PC-3 (cell line): ENCODE measurements at regions of chr12 and their contacts with region 1.

Region 1: DNA sequence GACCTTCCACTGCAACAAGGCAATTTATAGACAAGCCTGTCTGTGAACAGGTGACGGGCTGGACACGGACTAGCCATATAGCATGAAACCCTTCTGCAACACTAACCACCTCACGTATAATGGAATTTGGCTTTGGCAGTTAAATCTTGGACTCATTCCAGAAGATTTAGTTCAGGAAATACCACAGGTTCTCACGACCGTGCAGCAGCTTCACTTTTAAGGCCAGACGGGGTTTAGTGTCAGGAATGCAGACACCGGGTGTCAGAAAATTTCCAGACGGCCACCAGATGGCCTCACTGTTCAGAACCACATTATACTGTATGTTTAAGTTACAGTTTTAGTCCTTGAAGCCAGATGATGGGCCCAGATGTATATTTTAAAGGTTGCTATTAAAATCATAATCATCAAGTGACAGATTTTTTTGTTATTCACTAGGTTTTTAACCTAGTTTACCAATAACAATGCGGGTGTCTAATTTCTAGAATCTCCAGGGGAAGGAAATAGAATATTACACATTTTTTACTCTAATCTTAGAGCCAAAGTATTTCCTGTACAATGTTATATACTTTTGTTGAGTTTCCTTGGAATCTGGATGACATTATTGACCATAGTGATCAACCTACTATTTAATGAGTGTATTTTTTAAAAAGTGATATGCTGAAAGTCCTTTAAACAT is 90.5 kb upstream of the TMPO start:
- DNase-seq: peak; percentile 89
- ATAC-seq: peak; percentile 97
- H3K4me3 ChIP-seq: 0 out of 2 replicates have a peak overlapping the region, but pooled peaks have one; percentile 20
- H3K27ac ChIP-seq: no peak overlapping the region
- H3K4me1 ChIP-seq: peaks cover 5% of the 10 kb centered on the region
- H3K27me3 ChIP-seq: no peaks in the 10 kb centered on the region
- CTCF ChIP-seq: peak; percentile 88

Region 2: DNA sequence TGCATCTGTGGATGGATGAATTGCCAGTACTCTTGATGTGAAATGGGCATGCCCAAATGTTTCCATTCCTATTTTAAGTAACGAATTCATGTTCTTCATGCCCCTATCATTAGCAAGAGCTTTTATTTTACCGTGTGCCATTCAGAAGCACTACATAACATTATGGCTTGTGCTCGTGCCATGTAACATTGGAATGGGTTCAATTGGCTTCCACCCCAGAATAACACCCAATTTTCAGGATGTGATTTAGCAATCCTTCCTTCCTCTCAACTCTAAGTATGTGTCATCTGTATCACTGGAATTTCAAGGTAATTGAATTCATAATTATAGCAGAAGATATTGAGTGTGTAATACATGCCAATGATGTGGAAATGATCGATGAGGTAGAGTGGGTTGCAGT is 55.3 kb before region 1 on chr12:
- CTCF ChIA-PET with region 1: no interaction called
- POLR2A ChIA-PET with region 1: no interaction called
- intact Hi-C with region 1: no loop called
- DNase-seq: no peak
- ATAC-seq: no peak
- H3K4me3 ChIP-seq: no peak overlapping the region
- H3K27ac ChIP-seq: no peak overlapping the region
- H3K4me1 ChIP-seq: no peaks in the 10 kb centered on the region
- H3K27me3 ChIP-seq: peaks cover 66% of the 10 kb centered on the region
- CTCF ChIP-seq: no peak

Region 3: GRCh38 chr12:98490501-98491453 is 65.9 kb after region 1 on chr12:
- CTCF ChIA-PET with region 1: no interaction called
- POLR2A ChIA-PET with region 1: no interaction called
- intact Hi-C with region 1: loop called (anchors 2 kb)
- DNase-seq: peak; percentile 90
- ATAC-seq: peak; percentile 90
- H3K4me3 ChIP-seq: peak overlapping the region; percentile 50
- H3K27ac ChIP-seq: peak overlapping the region; percentile 33
- H3K4me1 ChIP-seq: peaks cover 16% of the 10 kb centered on the region
- H3K27me3 ChIP-seq: no peaks in the 10 kb centered on the region
- CTCF ChIP-seq: peak; percentile 87

Region 4: GRCh38 chr12:98516184-98516873 is 91.5 kb after region 1 on chr12:
- CTCF ChIA-PET with region 1: interaction called, 10 read pairs
- POLR2A ChIA-PET with region 1: no interaction called
- intact Hi-C with region 1: loop called (anchors 1 kb)
- DNase-seq: peak; percentile 89
- ATAC-seq: peak; percentile 45
- H3K4me3 ChIP-seq: peak overlapping the region; percentile 98
- H3K27ac ChIP-seq: peak overlapping the region; percentile 89
- H3K4me1 ChIP-seq: peaks cover 31% of the 10 kb centered on the region
- H3K27me3 ChIP-seq: no peaks in the 10 kb centered on the region
- CTCF ChIP-seq: peak; percentile 83

Region 5: GRCh38 chr12:98532681-98533304 is 107.9 kb after region 1 on chr12:
- CTCF ChIA-PET with region 1: no interaction called
- POLR2A ChIA-PET with region 1: no interaction called
- intact Hi-C with region 1: loop called (anchors 2 kb)
- DNase-seq: peak; percentile 89
- ATAC-seq: peak; percentile 81
- H3K4me3 ChIP-seq: no peak overlapping the region
- H3K27ac ChIP-seq: no peak overlapping the region
- H3K4me1 ChIP-seq: no peaks in the 10 kb centered on the region
- H3K27me3 ChIP-seq: no peaks in the 10 kb centered on the region
- CTCF ChIP-seq: peak; percentile 84

Region 6: DNA sequence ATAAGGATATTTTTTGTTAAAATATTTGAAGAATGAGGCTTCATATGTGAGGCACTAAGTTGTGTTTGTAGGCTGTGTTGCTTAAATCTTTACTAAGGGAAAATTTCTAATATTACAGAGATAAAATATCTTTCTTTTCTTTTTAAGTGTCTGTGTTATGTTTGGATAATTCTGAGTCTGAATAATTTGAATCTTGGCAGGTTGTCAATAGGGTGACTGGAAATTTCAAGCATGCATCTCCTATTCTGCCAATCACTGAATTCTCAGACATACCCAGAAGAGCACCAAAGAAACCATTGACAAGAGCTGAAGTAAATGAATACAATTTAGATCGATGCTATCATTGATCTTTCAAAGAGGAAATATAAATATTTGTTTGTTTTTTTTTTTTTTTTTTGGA is 119.9 kb after region 1 on chr12:
- CTCF ChIA-PET with region 1: no interaction called
- POLR2A ChIA-PET with region 1: no interaction called
- intact Hi-C with region 1: no loop called
- DNase-seq: no peak
- ATAC-seq: no peak
- H3K4me3 ChIP-seq: no peak overlapping the region
- H3K27ac ChIP-seq: no peak overlapping the region
- H3K4me1 ChIP-seq: no peaks in the 10 kb centered on the region
- H3K27me3 ChIP-seq: no peaks in the 10 kb centered on the region
- CTCF ChIP-seq: no peak

Region 7: GRCh38 chr12:98635657-98636323 is 210.9 kb after region 1 on chr12:
- CTCF ChIA-PET with region 1: no interaction called
- POLR2A ChIA-PET with region 1: no interaction called
- intact Hi-C with region 1: no loop called
- DNase-seq: peak; percentile 90
- ATAC-seq: peak; percentile 99
- H3K4me3 ChIP-seq: no peak overlapping the region; the same call in 1 of the 2 replicates
- H3K27ac ChIP-seq: no peak overlapping the region
- H3K4me1 ChIP-seq: peaks cover 21% of the 10 kb centered on the region
- H3K27me3 ChIP-seq: no peaks in the 10 kb centered on the region
- CTCF ChIP-seq: no peak